Naive thymus-derived CD8-positive, alpha-beta T cell (primary cell): ENCODE measurements at regions of chr11 and their contacts with region 1.

Region 1: DNA sequence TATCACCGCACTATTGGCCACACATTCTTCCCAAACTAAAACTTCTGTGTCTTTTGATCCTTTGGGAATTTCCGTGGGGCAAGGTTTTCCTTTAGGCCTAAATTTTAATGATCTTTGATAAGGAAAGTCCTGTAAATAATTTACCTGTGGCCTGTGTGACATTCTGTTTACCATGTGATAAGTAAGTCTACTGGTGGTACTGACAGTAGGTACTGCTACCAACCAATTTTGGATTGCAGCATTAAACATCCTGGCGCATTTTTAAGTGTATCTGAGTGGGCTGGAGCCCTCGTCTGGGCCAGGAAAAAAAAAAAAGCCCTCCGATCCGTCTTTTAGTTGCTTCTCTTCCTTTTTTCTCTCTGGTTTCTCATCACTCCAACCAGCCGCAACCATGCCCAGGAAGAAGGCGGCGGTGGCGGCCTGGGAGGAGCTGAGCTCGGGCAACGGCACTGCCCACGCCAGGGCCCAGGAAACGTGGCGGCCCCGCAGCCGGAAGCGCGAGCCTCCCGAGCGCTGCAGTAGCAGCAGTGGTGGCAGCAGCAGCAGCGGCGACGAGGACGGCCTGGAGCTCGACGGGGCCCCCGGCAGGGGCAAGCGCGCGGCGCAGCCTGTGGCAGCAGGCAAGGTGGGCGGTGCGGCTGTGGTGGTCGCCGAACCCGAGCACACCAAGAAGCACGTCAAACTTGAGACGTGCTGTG is 33.6 kb downstream of the ASRGL1 start:
- DNase-seq: peak in 9 of 10 donors; percentile 25 to 68 (median 49)
- ATAC-seq: peak; percentile 96 to 98
- H3K4me3 Mint-ChIP-seq: peak overlapping the region; percentile 68 to 89 (median 80)
- H3K27ac Mint-ChIP-seq: peak overlapping the region; percentile 83 to 96 (median 93)
- H3K4me1 Mint-ChIP-seq: peaks cover 3 to 13% (median 5%) of the 10 kb centered on the region in 4 donors
- H3K27me3 Mint-ChIP-seq: no peaks in the 10 kb centered on the region

Region 2: GRCh38 chr11:62179995-62180394 is 190.9 kb before region 1 on chr11:
- POLR2A ChIA-PET with region 1: no interaction called
- DNase-seq: no peak
- ATAC-seq: no peak
- H3K4me3 Mint-ChIP-seq: no peak overlapping the region
- H3K27ac Mint-ChIP-seq: peak overlapping the region in 1 of 10 donors; percentile 10
- H3K4me1 Mint-ChIP-seq: no peaks in the 10 kb centered on the region
- H3K27me3 Mint-ChIP-seq: peaks cover 8 to 21% (median 14%) of the 10 kb centered on the region in 5 donors

Region 3: DNA sequence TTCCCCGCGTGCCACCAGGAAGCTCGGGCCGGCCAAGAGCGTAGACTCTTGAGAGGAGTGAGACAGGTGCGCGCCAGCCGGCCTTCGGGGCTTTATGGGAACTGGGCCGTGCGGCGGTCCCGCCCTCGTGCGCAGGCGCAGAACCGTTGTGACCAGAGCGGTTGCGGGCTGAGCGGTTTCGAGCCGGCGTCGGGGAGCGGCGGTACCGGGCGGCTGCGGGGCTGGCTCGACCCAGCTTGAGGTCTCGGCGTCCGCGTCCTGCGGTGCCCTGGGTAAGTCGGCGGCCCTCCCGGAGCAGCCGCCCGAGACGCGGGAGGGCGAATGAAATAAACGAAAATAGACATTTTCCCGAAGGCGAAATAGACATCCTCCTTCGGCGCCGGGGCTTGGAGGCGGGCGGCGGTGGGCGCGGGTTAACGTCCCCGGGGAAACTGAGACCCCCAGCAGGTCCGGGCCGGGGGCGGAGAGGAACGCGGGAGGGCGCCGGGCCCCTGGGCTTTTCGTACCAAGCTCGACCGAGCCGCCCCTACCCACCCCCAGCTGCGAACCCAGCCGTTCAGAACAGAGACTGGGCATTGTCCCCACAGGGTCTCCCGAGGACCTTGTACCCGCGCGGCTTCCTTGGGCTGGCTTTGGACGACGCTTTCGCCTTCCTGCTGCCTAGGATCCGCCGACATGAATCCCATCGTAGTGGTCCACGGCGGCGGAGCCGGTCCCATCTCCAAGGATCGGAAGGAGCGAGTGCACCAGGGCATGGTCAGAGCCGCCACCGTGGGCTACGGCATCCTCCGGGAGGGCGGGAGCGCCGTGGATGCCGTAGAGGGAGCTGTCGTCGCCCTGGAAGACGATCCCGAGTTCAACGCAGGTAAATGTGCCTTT is 33.4 kb before region 1 on chr11 and contains the start of gene ASRGL1:
- POLR2A ChIA-PET with region 1: interaction called, 10 read pairs
- DNase-seq: peak; percentile 63 to 87 (median 72)
- ATAC-seq: peak; percentile 85 to 94
- H3K4me3 Mint-ChIP-seq: peak within 1 kb of the TSS; percentile 82 to 96 (median 90)
- H3K27ac Mint-ChIP-seq: peak within 1 kb of the TSS in 9 of 10 donors; percentile 58 to 90 (median 78)
- H3K4me1 Mint-ChIP-seq: peaks cover 11 to 24% (median 19%) of the 10 kb centered on the region in 4 donors
- H3K27me3 Mint-ChIP-seq: peaks cover 0 to 11% (median 2%) of the 10 kb centered on the region in 5 donors
- polyA plus RNA-seq, gene ASRGL1: 5.1 to 13.3 (median 6.0) TPM